ENCODE measurements at regions of chr2 and their contacts with region 1.

Region 1: DNA sequence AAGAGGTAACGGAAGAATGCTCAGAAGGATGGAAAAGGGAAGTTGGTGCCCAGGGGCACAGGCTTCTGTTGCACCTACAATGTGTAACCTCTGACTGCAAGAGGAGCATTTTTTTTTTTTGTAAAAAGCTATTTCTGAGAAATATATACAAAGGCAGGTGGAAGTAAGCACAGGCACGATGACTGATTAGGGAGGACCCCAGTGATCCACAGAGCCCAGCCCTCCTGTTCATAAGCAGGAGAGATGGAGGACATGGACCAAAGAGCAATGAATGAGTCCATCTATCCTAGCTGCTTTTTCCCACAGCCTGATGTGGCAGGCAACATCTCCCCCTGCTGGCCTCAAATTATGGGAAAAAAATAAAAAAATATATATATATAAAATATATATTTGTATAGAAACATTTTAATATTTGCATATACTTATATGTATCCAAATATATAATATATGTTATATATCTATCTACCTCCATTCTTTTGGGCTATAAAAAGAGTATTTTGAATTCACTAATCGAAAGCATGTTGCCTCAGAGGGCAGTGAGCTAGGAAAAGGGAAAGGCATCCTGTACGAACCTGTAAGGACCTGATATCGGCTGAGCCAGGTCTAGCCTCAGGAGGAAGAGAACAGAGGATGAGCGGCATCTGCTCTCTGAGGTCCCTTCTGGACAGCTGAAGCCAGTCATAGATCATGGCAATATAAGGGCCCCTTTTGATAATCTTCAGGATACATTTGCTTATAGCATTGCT is 166.0 kb upstream of the STK17B start:
- DNase-seq: no peak
- H3K4me3 ChIP-seq: no peak overlapping the region
- H3K27ac ChIP-seq: no peak overlapping the region
- H3K27me3 ChIP-seq: no peaks in the 10 kb centered on the region
- CTCF ChIP-seq: peak; percentile 60

Region 2: GRCh38 chr2:196068271-196069209 is 268.8 kb before region 1 on chr2 and contains the start of gene DNAH7:
- CTCF ChIA-PET with region 1: interaction called, 60 read pairs
- POLR2A ChIA-PET with region 1: no interaction called
- DNase-seq: peak; percentile 58
- H3K4me3 ChIP-seq: peak within 1 kb of the TSS; percentile 96
- H3K27ac ChIP-seq: peak within 1 kb of the TSS; percentile 60
- H3K27me3 ChIP-seq: no peaks in the 10 kb centered on the region
- CTCF ChIP-seq: peak; percentile 99
- polyA plus RNA-seq, gene DNAH7: 0.74 and 1.2 TPM in 2 replicates

Region 3: DNA sequence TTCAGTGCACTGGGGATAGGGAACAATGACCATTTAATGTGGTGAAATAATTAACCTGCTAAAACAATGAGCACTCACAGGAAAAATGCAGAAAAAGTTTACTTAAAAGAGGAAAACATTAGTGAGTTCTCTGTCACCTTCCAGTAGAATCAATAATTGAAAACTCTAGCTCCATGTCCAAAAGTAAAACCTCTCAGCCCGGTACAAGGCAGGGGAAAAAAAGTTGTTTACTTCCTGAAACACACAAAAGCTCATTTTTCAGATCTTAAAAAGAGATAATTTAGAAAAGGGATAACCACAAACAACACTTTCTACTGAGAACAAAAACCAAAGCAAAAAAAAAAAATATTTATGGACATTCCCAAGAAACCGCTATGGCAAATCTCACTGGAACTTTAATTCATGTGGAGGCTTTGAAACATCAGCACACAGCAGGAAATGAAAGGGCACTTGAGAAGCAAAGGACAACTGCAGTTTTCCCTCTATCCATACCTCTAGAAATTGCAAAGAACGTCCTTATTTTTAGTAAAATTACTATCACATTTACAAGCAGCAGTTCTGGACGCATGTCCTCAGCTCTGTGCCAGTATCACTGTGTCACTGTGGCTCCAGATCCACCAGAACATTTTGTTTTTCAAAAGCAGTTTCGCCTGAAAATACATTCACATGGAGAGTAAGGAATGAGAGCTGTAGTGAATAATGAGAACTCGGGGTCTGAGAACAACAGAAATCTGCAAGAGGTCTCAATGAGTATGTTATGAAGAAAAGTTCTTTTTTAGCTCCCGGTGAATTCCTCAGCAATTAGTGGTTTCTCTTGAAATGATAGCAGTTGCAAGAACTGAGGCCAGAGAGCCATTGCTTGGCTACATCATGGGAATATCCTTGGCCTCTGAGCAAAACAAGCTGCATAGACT is 224.1 kb before region 1 on chr2:
- CTCF ChIA-PET with region 1: interaction called, 10 read pairs
- POLR2A ChIA-PET with region 1: no interaction called
- DNase-seq: peak; percentile 50
- H3K4me3 ChIP-seq: no peak overlapping the region
- H3K27ac ChIP-seq: peak overlapping the region; percentile 76
- H3K27me3 ChIP-seq: no peaks in the 10 kb centered on the region
- CTCF ChIP-seq: no peak

Region 4: GRCh38 chr2:196291873-196292800 is 45.2 kb before region 1 on chr2:
- CTCF ChIA-PET with region 1: interaction called, 36 read pairs
- POLR2A ChIA-PET with region 1: no interaction called
- DNase-seq: no peak
- H3K4me3 ChIP-seq: no peak overlapping the region
- H3K27ac ChIP-seq: no peak overlapping the region
- H3K27me3 ChIP-seq: no peaks in the 10 kb centered on the region
- CTCF ChIP-seq: no peak

Region 5: DNA sequence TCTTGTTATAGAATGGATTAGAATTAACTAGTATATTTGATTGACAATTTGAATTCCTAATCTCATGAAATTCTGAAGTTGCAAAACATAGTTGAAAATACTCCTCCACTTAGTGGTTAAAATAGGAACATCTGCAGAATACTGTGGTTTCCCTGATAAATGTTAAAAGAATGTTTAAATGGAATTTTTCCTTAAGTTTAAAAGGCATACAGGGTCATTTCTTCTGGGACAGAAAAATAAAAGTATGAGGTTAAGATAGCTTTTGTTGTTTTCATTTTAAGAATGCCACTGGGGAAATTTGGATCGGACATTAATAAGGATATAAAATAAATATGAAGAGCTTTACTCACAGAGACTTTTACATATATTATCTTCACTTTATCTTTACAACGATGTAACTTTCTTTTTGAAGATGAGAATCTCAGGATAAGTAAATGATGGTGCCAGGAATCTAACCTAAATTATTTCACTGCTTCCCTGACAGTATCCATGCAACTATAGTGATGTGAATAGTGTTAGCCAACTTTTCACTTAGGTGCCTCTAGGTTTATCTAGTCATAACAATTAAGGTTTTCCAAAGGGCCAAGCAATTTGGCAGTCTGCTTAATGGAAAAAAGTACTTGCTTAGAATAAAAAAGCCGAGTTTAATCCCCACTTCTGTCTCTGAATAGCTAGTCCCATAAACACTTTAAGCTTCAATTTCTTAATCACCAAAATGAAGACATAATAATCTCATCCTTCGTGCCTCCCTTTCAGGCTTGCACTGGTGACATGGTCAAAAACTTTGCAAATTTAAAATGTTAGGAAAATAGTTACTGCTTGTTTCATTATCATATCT is 14.2 kb before region 1 on chr2:
- CTCF ChIA-PET with region 1: interaction called, 67 read pairs
- POLR2A ChIA-PET with region 1: no interaction called
- DNase-seq: no peak
- H3K4me3 ChIP-seq: no peak overlapping the region
- H3K27ac ChIP-seq: no peak overlapping the region
- H3K27me3 ChIP-seq: no peaks in the 10 kb centered on the region
- CTCF ChIP-seq: no peak

Region 6: GRCh38 chr2:196361606-196362326 is 24.4 kb after region 1 on chr2:
- CTCF ChIA-PET with region 1: interaction called, 18 read pairs
- POLR2A ChIA-PET with region 1: no interaction called
- DNase-seq: no peak
- H3K4me3 ChIP-seq: no peak overlapping the region
- H3K27ac ChIP-seq: no peak overlapping the region
- H3K27me3 ChIP-seq: no peaks in the 10 kb centered on the region
- CTCF ChIP-seq: no peak

Region 7: GRCh38 chr2:196482119-196483065 is 145.0 kb after region 1 on chr2:
- CTCF ChIA-PET with region 1: no interaction called
- POLR2A ChIA-PET with region 1: no interaction called
- DNase-seq: no peak
- H3K4me3 ChIP-seq: no peak overlapping the region
- H3K27ac ChIP-seq: no peak overlapping the region
- H3K27me3 ChIP-seq: no peaks in the 10 kb centered on the region
- CTCF ChIP-seq: no peak

Region 8: DNA sequence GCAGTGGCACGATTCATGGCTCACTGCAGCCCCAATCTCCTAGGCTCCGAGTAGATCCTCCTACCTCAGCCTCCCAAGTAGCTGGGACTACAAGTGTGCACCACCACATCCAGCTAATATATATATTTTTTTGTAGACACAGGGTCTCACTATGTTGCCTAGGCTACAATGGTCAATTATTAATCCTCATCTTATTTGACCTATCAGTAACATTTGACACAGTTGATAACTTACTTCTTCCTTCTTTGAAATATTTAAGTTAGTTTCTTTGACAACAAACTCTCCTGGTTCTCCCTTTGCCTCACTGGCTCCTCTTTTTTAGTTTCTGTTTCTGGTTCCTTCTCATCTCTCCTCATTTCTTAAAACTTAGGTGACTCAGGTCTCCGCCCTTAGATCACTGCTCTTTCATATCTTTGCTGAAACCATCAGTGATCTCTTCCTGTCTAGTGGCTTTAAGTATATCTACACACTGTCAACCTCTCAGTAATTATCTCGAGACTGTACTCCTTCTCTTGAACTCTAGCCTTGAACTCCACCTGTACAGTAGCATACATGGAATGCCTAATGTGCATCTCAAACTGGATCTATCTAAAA is 577.6 kb after region 1 on chr2:
- CTCF ChIA-PET with region 1: no interaction called
- POLR2A ChIA-PET with region 1: no interaction called
- DNase-seq: no peak
- H3K4me3 ChIP-seq: no peak overlapping the region
- H3K27ac ChIP-seq: no peak overlapping the region
- H3K27me3 ChIP-seq: no peaks in the 10 kb centered on the region
- CTCF ChIP-seq: no peak

Measured in AG04450 (cell line).